GM12878 (cell line): ENCODE measurements at regions of chr3 and their contacts with region 1.

Region 1: DNA sequence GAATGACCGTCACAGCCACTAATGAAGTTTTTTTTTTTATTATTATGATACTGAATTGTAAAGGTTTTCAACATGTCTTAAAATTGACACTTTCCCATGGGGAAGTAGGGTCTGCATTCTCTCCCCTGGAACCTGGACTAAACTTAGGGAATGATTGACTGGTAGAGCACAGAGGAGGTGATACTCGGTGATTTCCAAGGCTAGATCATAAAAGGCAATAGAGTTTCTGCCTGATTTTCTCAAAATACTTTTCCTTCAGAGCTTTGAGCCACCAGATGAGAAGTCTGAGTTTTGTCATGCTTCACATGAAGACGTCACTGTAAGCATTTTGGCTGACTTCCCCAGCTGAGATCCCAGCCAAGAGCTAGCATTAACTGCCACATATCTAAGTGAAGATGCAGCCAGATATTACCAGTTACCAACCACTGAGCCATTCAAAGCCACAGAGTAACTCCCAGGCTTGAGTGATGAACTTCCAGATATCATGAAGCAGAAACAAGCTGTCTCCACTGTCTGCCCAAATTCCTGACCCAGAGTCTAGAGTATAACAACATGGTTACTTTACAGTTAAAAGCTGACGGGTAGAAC is 105.8 kb downstream of the LSAMP start:
- DNase-seq: no peak
- ATAC-seq: peak; percentile 10; the same call in 2 of the 3 replicates
- H3K4me3 ChIP-seq: no peak overlapping the region
- H3K27ac ChIP-seq: no peak overlapping the region
- H3K4me1 ChIP-seq: no peaks in the 10 kb centered on the region
- H3K27me3 ChIP-seq: no peaks in the 10 kb centered on the region
- CTCF ChIP-seq: no peak
- EP300 ChIP-seq: no peak
- POLR2A ChIP-seq: no peak
- RAD21 ChIP-seq: no peak

Region 2: DNA sequence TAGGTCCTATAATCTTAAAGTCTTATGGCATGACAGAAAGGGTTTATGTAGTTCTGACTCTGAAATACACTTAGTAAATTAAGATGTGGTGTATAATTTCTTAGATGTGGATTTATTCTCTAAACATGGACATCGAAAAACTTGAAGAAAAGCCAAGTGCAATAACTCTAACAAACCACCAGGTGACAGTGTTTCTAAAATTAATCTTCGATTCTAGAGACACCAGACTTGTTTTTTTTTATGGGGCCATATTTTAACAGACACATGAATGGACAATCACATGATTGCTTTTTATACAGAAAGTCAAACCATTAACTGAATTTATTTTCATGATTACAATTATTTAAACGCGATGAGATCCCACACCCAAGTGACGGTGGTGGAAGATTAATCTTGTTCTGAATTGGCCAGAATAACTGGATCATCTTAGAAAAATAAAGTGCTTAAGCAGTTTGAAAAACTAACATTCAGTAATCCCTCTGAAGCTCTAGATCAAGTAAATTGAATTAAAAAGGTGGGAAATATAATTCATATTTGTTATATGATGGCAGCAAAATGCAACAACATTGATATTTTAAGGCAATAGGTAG is 199.3 kb before region 1 on chr3:
- CTCF ChIA-PET with region 1: interaction called, 9 read pairs
- POLR2A ChIA-PET with region 1: no interaction called
- RAD21 ChIA-PET with region 1: interaction called, 3 read pairs
- SMC1A ChIA-PET with region 1: interaction called, 3 read pairs
- in situ Hi-C with region 1: no loop called
- intact Hi-C with region 1: loop called (anchors 1 kb)
- DNase-seq: no peak
- ATAC-seq: peak; percentile 63
- H3K4me3 ChIP-seq: no peak overlapping the region
- H3K27ac ChIP-seq: no peak overlapping the region
- H3K4me1 ChIP-seq: no peaks in the 10 kb centered on the region
- H3K27me3 ChIP-seq: no peaks in the 10 kb centered on the region
- CTCF ChIP-seq: peak; percentile 69 to 78 (median 77)
- EP300 ChIP-seq: no peak
- POLR2A ChIP-seq: no peak
- RAD21 ChIP-seq: peak; percentile 87

Region 3: GRCh38 chr3:116281313-116282143 is 58.0 kb before region 1 on chr3:
- CTCF ChIA-PET with region 1: interaction called, 3 read pairs
- POLR2A ChIA-PET with region 1: interaction called, 4 read pairs
- RAD21 ChIA-PET with region 1: interaction called, 11 read pairs
- SMC1A ChIA-PET with region 1: interaction called, 8 read pairs
- in situ Hi-C with region 1: no loop called
- intact Hi-C with region 1: no loop called
- DNase-seq: no peak
- ATAC-seq: peak; percentile 89
- H3K4me3 ChIP-seq: no peak overlapping the region
- H3K27ac ChIP-seq: no peak overlapping the region
- H3K4me1 ChIP-seq: no peaks in the 10 kb centered on the region
- H3K27me3 ChIP-seq: no peaks in the 10 kb centered on the region; a peak in 2 of 4 replicates
- CTCF ChIP-seq: no peak
- EP300 ChIP-seq: peak in 1 of 2 experiments; percentile 43; a peak in 1 of 4 replicates
- POLR2A ChIP-seq: no peak
- RAD21 ChIP-seq: no peak

Region 4: GRCh38 chr3:116314476-116314875 is 25.1 kb before region 1 on chr3:
- CTCF ChIA-PET with region 1: interaction called, 14 read pairs
- POLR2A ChIA-PET with region 1: no interaction called
- RAD21 ChIA-PET with region 1: interaction called, 4 read pairs
- SMC1A ChIA-PET with region 1: interaction called, 17 read pairs
- in situ Hi-C with region 1: no loop called
- intact Hi-C with region 1: no loop called
- DNase-seq: no peak
- ATAC-seq: no peak
- H3K4me3 ChIP-seq: no peak overlapping the region
- H3K27ac ChIP-seq: no peak overlapping the region
- H3K4me1 ChIP-seq: no peaks in the 10 kb centered on the region
- H3K27me3 ChIP-seq: no peaks in the 10 kb centered on the region
- CTCF ChIP-seq: no peak
- EP300 ChIP-seq: no peak
- POLR2A ChIP-seq: no peak
- RAD21 ChIP-seq: no peak

Region 5: DNA sequence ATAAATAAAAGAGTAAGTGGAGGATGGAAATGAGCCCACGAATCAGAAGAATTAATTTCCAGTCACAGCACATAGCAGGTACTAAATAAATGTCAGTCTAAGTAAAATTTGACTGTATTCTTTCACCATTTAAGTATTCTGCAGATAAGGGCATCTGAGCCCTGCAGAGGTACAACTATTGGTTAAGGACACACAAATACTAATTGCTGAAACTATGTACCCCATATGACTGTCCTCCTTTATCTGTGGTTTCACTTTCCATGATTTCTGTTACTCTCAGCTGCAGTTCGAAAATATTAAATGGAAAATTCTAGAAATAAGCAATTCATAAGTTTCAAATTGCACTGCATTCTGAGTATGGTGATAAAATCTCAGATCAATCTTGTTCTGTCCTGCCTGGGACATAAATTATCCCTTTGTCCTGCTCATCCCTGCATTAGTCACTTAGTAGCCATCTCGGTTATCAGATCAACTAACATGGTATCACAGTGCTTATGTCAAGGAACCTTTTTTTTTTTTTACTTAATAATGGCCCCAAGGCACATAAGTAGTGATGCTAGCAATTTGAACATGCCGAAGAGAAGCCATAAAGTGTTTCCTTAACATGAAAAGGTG is 10.7 kb after region 1 on chr3:
- CTCF ChIA-PET with region 1: interaction called, 3 read pairs
- POLR2A ChIA-PET with region 1: interaction called, 5 read pairs
- RAD21 ChIA-PET with region 1: interaction called, 8 read pairs
- SMC1A ChIA-PET with region 1: interaction called, 39 read pairs
- in situ Hi-C with region 1: no loop called
- intact Hi-C with region 1: no loop called
- DNase-seq: no peak
- ATAC-seq: peak; percentile 58; the same call in 2 of the 3 replicates
- H3K4me3 ChIP-seq: no peak overlapping the region
- H3K27ac ChIP-seq: no peak overlapping the region
- H3K4me1 ChIP-seq: no peaks in the 10 kb centered on the region
- H3K27me3 ChIP-seq: no peaks in the 10 kb centered on the region
- CTCF ChIP-seq: no peak
- EP300 ChIP-seq: no peak
- POLR2A ChIP-seq: no peak
- RAD21 ChIP-seq: no peak

Region 6: DNA sequence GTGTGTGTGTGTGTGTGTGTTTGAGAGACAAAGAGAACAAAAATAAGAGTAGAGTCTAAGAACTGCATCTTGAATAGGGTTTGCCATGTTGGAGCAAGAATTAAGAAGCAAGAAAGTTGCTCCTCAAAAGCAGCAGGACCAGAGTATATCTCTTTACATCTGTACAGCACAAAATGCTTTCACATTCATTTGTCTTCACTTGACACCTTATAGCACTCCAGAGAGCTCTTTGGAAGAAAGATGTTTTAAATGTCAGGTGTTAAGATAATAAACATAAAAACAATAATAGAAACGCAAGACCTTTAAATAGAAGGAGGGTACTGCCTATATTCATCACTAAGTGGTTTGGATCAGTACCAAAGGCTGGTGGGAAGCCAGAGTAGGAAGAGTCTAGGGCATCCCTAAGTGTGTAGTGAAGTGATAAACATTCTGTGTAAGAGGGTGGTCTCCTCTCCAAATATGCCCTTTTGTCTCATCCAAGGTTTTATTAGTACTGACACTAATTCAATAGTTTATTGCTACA is 124.8 kb after region 1 on chr3:
- CTCF ChIA-PET with region 1: no interaction called
- POLR2A ChIA-PET with region 1: no interaction called
- RAD21 ChIA-PET with region 1: no interaction called
- SMC1A ChIA-PET with region 1: no interaction called
- in situ Hi-C with region 1: no loop called
- intact Hi-C with region 1: no loop called
- DNase-seq: no peak
- ATAC-seq: no peak
- H3K4me3 ChIP-seq: no peak overlapping the region
- H3K27ac ChIP-seq: no peak overlapping the region
- H3K4me1 ChIP-seq: no peaks in the 10 kb centered on the region
- H3K27me3 ChIP-seq: no peaks in the 10 kb centered on the region
- CTCF ChIP-seq: no peak
- EP300 ChIP-seq: no peak
- POLR2A ChIP-seq: no peak
- RAD21 ChIP-seq: no peak